ENCODE measurements at regions of chr7 and their contacts with region 1.

Region 1: GRCh38 chr7:63900394-63901203 is 98.0 kb upstream of the ZNF722 start:
- DNase-seq: peak; percentile 49 to 96 (median 89)
- ATAC-seq: peak; percentile 92 to 98 (median 93)
- H3K4me3 ChIP-seq: peak overlapping the region; percentile 80 to 86
- H3K4me3 Mint-ChIP-seq: peak overlapping the region; percentile 86 to 98 (median 89)
- H3K27ac ChIP-seq: peak overlapping the region; percentile 69
- H3K27ac Mint-ChIP-seq: peak overlapping the region; percentile 90 to 97
- H3K4me1 ChIP-seq: peaks cover 0 to 19% of the 10 kb centered on the region in 2 experiments
- H3K4me1 Mint-ChIP-seq: peaks cover 14% of the 10 kb centered on the region in 3 donors
- H3K27me3 ChIP-seq: peaks cover 0 to 2% of the 10 kb centered on the region in 2 experiments
- H3K27me3 Mint-ChIP-seq: no peaks in the 10 kb centered on the region

Region 2: GRCh38 chr7:63925623-63926460 is 25.2 kb after region 1 on chr7:
- CTCF ChIA-PET with region 1: interaction called, 3 to 20 read pairs
- POLR2A ChIA-PET with region 1: interaction called, 4 to 22 read pairs
- DNase-seq: peak; percentile 55 to 96 (median 88)
- ATAC-seq: peak; percentile 94 to 98 (median 94)
- H3K4me3 ChIP-seq: peak overlapping the region; percentile 64 to 87
- H3K4me3 Mint-ChIP-seq: peak overlapping the region; percentile 93 to 97 (median 95)
- H3K27ac ChIP-seq: peak overlapping the region; percentile 67
- H3K27ac Mint-ChIP-seq: peak overlapping the region; percentile 96 to 99
- H3K4me1 ChIP-seq: peaks cover 0 to 16% of the 10 kb centered on the region in 2 experiments
- H3K4me1 Mint-ChIP-seq: peaks cover 15 to 20% (median 18%) of the 10 kb centered on the region in 3 donors
- H3K27me3 ChIP-seq: no peaks in the 10 kb centered on the region
- H3K27me3 Mint-ChIP-seq: no peaks in the 10 kb centered on the region

Measured in T-cell (primary cell).